Heart right ventricle (tissue), 16 donors: ENCODE measurements at regions of chr7 and their contacts with region 1.

Region 1: GRCh38 chr7:18064242-18064838 is 36.7 kb upstream of the PRPS1L1 start:
- DNase-seq: no peak
- ATAC-seq: peak in 1 of 8 donors; percentile 48
- H3K4me3 ChIP-seq: no peak overlapping the region
- H3K27ac ChIP-seq: no peak overlapping the region
- H3K4me1 ChIP-seq: no peaks in the 10 kb centered on the region
- H3K27me3 ChIP-seq: no peaks in the 10 kb centered on the region
- CTCF ChIP-seq: peak; percentile 35 to 68 (median 60)

Region 2: DNA sequence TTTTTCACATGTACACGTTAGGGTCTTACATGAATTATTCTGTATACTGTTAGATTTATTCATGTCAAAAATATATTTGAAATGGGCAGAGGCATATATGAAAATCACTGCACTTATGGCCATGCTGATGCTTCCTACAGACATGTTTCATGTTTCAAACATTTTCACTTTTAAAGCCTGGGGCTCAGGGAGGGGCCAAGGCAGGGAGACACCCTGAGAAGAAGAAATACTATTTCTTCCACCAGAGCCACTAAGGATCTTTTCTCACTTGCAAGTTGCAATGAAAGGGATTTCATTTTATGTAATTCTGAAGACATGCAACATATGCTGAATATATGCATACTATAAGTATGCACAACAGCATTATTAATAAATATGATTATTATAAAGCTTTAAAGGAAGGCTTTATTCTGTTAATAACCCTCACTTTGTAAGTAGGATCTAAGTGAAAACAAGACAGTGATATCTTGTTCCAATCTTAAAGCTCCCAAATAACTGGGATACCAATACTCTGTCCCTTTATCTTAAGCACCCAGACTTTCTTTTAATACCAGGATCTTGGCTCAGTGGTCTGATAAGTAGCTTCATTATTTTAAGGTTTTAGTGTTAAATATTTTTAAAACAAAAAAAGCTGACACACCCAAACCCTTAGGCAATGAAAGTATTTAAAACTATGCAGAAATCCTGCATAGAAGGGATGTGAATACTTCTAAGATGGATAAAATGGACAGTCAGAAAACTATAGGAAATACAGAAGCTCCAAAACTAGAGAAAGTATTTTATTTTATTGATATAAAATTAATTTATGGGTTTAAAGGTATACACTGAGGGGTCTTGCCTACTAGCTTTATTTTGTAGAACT is 272.0 kb before region 1 on chr7:
- intact Hi-C with region 1: no loop called
- DNase-seq: no peak
- ATAC-seq: no peak
- H3K4me3 ChIP-seq: no peak overlapping the region
- H3K27ac ChIP-seq: no peak overlapping the region
- H3K4me1 ChIP-seq: no peaks in the 10 kb centered on the region
- H3K27me3 ChIP-seq: no peaks in the 10 kb centered on the region
- CTCF ChIP-seq: no peak

Region 3: DNA sequence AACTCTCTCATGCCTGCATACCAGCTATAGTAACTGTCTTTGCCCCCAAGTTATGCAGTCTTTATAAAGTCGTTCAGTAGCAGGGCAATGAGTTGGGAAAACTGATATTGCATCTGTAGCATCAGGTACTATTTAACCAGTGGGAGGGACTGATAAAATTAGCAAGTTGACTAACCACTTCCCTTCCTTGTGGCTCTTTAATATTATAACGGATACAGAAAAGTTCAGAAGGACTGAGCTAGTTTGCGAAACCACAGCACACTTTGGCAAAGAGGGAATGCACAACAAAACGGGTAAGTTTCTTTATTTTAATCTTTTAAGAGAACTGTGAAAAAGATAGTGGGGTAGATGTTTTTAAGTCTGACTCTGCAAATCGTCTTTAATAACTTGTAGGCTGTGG is 225.9 kb after region 1 on chr7:
- intact Hi-C with region 1: loop called in 2 of 10 experiments (anchors 5 to 10 kb)
- DNase-seq: no peak
- ATAC-seq: peak in 3 of 8 donors; percentile 27 to 60 (median 33)
- H3K4me3 ChIP-seq: peak overlapping the region in 7 of 10 donors; percentile 2 to 35 (median 24)
- H3K27ac ChIP-seq: peak overlapping the region in 1 of 10 donors; percentile 21
- H3K4me1 ChIP-seq: peaks cover 0 to 53% (median 15%) of the 10 kb centered on the region in 9 donors
- H3K27me3 ChIP-seq: no peaks in the 10 kb centered on the region
- CTCF ChIP-seq: no peak

Region 4: DNA sequence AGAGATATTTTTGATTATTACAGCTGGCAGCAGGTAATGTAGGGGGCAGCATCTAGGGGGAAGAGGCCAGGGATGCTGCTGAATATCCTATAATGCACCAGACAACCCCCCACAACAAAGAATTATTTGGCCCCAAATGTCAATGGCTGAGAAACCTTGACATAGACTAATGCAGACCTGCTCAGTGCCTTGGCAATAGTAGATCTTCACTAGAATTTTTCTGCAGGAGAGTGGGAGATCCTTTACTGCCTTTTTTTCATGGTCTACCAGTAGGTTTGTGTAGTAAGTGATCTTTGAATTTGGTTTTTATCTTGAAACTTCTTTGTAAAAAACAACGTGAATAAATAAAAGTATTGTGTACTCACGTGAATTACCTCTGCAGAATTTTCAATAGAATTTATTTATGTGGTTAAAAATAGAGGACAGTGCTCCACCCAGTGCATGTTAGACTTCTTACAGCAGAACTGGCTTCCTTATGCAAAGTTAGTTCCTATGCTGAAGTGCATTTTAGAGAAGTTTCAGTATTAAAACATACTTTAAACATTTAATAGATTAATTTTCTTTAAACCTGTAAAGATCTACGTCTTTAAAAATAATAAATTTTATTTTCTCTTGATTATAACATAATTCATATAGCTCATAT is 231.6 kb after region 1 on chr7:
- intact Hi-C with region 1: loop called in 2 of 10 experiments (anchors 5 to 10 kb)
- DNase-seq: no peak
- ATAC-seq: peak in 1 of 8 donors; percentile 56
- H3K4me3 ChIP-seq: no peak overlapping the region
- H3K27ac ChIP-seq: no peak overlapping the region
- H3K4me1 ChIP-seq: peaks cover 0 to 39% (median 0%) of the 10 kb centered on the region in 9 donors
- H3K27me3 ChIP-seq: no peaks in the 10 kb centered on the region
- CTCF ChIP-seq: peak in 6 of 9 donors; percentile 15 to 52 (median 42)

Region 5: DNA sequence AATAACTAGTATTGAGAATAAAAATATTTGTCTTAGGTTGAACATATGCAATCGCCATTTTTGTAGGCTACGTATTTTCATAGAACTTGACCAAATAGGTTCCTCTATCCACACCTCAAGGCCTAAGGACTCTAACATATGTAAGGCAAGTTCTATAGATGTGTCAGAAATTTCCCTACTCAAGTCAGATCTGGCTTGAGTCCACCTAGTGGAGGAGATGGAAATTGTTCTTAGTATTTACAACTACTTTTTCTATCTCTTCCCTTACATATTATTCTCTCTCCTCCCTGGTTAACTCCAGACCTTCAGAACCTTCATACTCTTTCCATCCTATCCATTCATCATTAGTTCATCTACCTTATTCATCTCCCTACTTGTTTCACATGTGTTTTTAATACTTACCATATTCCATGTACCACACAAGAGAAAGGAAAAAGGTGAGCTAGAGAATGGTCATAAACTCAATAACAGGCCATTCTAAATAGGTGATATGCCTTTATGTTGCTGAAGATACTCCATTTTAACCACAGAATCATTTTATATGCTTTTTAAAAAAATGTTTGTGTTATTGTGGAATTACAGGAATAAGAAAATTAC is 256.7 kb after region 1 on chr7:
- intact Hi-C with region 1: loop called in 1 of 10 experiments (anchors 10 kb)
- DNase-seq: no peak
- ATAC-seq: no peak
- H3K4me3 ChIP-seq: no peak overlapping the region
- H3K27ac ChIP-seq: no peak overlapping the region
- H3K4me1 ChIP-seq: peaks cover 0 to 1% (median 0%) of the 10 kb centered on the region in 9 donors
- H3K27me3 ChIP-seq: no peaks in the 10 kb centered on the region
- CTCF ChIP-seq: peak; percentile 19 to 65 (median 50)